ENCODE measurements at regions of chr6 and their contacts with region 1.

Region 1: GRCh38 chr6:37257634-37258404 is at the starts of genes TBC1D22B and TMEM217:
- DNase-seq: peak; percentile 98
- H3K4me3 Mint-ChIP-seq: peak within 1 kb of the TSS; percentile 86
- H3K27ac Mint-ChIP-seq: peak within 1 kb of the TSS; percentile 87
- H3K4me1 Mint-ChIP-seq: peaks cover 46% of the 10 kb centered on the region
- H3K27me3 Mint-ChIP-seq: no peaks in the 10 kb centered on the region
- total RNA-seq, gene TBC1D22B: 14.4 to 15.7 TPM
- total RNA-seq, gene TMEM217: 2.2 to 3.3 TPM

Region 2: GRCh38 chr6:37222125-37222967 is 35.5 kb before region 1 on chr6:
- CTCF ChIA-PET with region 1: no interaction called
- POLR2A ChIA-PET with region 1: interaction called, 3 read pairs
- intact Hi-C with region 1: loop called (anchors 1 kb)
- DNase-seq: peak; percentile 89
- H3K4me3 Mint-ChIP-seq: peak overlapping the region; percentile 73
- H3K27ac Mint-ChIP-seq: no peak overlapping the region
- H3K4me1 Mint-ChIP-seq: peaks cover 18% of the 10 kb centered on the region
- H3K27me3 Mint-ChIP-seq: no peaks in the 10 kb centered on the region

Region 3: DNA sequence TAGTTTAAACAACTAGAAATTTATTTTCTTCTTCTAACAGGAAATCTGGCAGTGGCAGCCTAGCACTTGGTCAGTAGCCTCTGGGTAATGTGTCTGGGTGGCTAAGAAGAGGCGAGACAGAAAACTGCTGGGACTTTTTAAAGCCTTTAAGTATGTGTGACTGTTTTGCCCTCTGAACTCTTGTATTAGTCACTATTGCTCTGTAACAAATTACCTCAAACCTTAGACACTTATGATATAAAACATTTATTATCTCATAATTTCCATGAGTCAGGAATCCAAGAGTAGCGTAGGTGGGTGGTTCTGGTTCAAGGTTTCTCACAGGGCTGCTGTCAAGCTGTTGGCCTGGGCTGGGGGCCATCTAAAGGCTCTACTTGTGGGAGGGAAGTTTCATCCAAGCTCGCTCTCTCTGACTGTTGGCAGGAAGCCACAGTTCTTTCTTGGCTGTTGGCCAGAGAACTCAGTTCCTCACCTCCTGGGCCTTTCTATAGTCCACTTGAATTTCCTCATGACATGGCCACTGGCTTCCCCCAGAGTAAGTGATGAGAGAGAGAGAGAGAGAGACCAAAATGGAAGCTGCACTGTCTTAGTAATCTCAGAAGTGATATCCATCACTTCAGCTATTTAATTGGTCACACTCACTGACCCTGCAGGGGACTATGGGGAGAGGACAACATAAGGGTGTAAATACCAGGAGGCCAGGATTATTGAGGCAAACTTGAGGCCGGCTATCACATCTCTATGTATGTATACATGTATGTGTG is 17.7 kb before region 1 on chr6:
- CTCF ChIA-PET with region 1: interaction called, 5 read pairs
- POLR2A ChIA-PET with region 1: interaction called, 19 read pairs
- intact Hi-C with region 1: loop called (anchors 1 kb)
- DNase-seq: peak; percentile 91
- H3K4me3 Mint-ChIP-seq: peak overlapping the region; percentile 2
- H3K27ac Mint-ChIP-seq: peak overlapping the region; percentile 88
- H3K4me1 Mint-ChIP-seq: peaks cover 41% of the 10 kb centered on the region
- H3K27me3 Mint-ChIP-seq: no peaks in the 10 kb centered on the region

Region 4: DNA sequence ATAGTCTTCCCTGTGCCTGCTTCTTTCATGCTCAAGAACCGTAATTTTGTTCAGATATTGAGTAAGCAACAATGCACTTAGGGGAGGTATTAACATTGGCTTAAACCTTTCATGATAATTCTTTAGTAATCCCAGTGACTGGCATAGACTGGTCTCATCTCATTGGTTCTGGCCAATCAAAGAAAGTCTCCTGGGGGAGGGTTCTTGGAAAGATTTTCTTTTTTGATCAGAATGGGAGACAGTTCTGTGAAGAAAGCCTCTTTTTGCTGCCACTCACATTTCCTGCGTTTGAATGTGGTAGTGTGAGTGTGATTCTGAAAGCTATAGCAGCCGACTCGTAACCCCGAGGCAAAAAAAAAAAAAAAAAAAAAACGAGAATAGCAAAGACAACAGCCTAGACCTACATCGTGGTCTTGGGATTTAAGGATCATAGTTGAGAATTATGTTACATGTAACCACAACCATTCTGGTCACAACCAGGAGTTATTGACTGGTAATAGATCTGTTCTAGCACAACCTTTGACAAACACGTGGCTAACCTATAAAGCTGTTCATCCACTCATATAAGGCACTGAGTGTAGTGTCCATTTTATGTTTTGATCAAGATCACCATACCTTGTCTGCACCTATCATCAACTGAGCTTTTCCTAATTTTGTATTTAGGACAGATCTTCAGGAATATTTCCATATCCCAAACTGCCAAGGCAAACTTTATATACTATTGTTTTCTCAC is 15.2 kb after region 1 on chr6:
- CTCF ChIA-PET with region 1: interaction called, 3 read pairs
- POLR2A ChIA-PET with region 1: interaction called, 4 read pairs
- intact Hi-C with region 1: loop called (anchors 2 kb)
- DNase-seq: peak; percentile 31
- H3K4me3 Mint-ChIP-seq: peak overlapping the region; percentile 36
- H3K27ac Mint-ChIP-seq: peak overlapping the region; percentile 70
- H3K4me1 Mint-ChIP-seq: peaks cover 45% of the 10 kb centered on the region
- H3K27me3 Mint-ChIP-seq: no peaks in the 10 kb centered on the region

Region 5: GRCh38 chr6:37285861-37286311 is 28.1 kb after region 1 on chr6:
- CTCF ChIA-PET with region 1: no interaction called
- POLR2A ChIA-PET with region 1: interaction called, 5 read pairs
- intact Hi-C with region 1: loop called (anchors 1 kb)
- DNase-seq: peak; percentile 61
- H3K4me3 Mint-ChIP-seq: no peak overlapping the region
- H3K27ac Mint-ChIP-seq: peak overlapping the region; percentile 72
- H3K4me1 Mint-ChIP-seq: peaks cover 43% of the 10 kb centered on the region
- H3K27me3 Mint-ChIP-seq: no peaks in the 10 kb centered on the region

Region 6: GRCh38 chr6:37303932-37304363 is 46.1 kb after region 1 on chr6:
- CTCF ChIA-PET with region 1: no interaction called
- POLR2A ChIA-PET with region 1: no interaction called
- intact Hi-C with region 1: no loop called
- DNase-seq: peak; percentile 28
- H3K4me3 Mint-ChIP-seq: no peak overlapping the region
- H3K27ac Mint-ChIP-seq: no peak overlapping the region
- H3K4me1 Mint-ChIP-seq: peaks cover 8% of the 10 kb centered on the region
- H3K27me3 Mint-ChIP-seq: no peaks in the 10 kb centered on the region

Region 7: DNA sequence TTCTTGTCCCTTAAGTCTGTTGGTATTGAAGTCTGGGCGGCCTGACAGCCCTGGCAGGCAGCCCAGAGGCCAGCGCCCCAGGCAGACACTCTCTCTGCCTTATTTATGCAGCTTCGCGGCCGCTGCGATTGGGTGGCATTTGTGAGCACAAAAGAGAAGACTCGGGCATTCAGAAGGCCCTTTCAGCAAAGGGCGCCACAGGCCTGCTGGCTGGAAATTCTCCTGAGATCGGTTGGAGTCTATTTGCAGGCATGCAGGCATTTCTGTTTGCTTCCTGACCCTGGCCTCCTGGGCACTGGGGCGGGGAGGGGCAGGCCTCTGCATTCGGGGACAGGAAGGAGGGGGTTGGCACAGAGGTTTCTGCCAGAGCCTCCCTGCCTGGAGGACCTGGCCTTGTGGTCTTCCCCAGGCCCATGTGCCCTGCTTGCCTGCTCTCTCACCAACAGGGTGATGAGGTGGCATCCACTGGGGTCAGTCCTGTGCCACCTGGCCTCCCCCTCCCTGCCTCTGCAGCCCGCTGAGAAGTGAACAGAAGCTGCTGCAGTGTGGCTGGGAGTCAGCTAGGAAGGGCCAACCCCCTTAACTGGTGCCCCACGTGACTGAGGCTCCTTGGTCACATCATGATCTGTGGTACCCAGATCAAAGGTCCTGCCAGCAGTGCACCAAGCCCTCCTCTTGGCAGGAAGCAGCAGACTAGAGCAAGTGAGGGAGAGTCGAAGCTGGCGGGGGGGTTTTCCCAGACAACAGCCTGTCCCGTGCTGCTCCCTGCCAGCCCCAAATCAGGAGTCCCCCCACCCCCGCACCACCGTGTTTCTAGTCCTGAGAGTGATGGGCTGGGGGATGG is 258.5 kb after region 1 on chr6:
- CTCF ChIA-PET with region 1: no interaction called
- POLR2A ChIA-PET with region 1: interaction called, 5 read pairs
- intact Hi-C with region 1: loop called (anchors 5 kb)
- DNase-seq: peak; percentile 96
- H3K4me3 Mint-ChIP-seq: peak overlapping the region; percentile 78
- H3K27ac Mint-ChIP-seq: peak overlapping the region; percentile 95
- H3K4me1 Mint-ChIP-seq: peaks cover 82% of the 10 kb centered on the region
- H3K27me3 Mint-ChIP-seq: no peaks in the 10 kb centered on the region